ENCODE measurements at regions of chr19 and their contacts with region 1.

Region 1: DNA sequence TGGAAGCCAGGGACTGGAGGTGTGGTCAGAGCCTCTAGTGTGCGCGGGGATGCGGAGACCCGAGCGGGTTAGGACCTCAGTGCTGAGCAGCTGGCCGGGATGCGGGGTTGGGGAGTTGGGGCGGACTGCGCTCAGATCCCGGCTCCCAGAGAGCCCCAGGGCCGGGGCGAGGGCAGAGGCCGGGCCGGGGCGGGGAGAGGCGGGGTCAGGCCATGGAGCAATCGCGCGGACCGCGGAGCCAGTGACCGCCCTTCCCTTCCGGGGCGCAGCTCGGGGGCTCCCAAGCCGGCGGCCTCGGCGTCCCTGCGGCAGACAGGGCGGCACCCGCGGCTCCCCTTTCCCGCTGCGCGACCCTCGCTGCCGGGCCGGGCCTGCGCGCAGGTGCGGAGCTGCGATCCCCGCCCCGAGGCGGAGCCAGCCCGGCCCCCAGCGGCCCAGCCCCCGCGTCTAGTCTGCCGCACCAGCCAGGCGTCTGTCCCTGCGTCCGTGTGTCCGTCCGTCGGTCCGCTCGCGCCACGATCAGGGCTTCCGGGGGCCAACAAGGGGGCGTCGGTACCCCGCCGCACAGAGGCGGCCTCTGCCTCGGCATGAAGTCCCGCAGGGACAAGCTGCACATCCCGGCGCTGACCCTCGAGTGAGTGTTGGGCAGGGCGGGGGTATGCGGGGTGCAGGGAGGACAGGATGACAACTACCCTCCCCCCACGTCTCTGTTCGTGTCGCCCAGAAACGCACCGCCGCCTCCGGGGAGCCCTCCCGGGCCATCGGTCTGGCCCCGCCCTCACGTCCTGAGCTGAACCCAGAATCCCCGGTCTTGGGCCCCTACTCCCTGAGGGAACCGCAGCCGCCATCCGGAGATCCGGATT is 12.4 kb downstream of the MAST3 start:
- DNase-seq: peak in 1 of 2 experiments; percentile 84
- H3K4me3 ChIP-seq: peak overlapping the region; percentile 55 to 71 (median 62)
- H3K27ac ChIP-seq: no peak overlapping the region
- H3K4me1 ChIP-seq: peaks cover 0 to 8% (median 4%) of the 10 kb centered on the region in 4 experiments; a peak in 3 of 7 replicates
- H3K27me3 ChIP-seq: peaks cover 0 to 12% (median 9%) of the 10 kb centered on the region in 4 experiments; a peak in 5 of 7 replicates
- CTCF ChIP-seq: no peak
- EP300 ChIP-seq: no peak
- POLR2A ChIP-seq: 0 out of 3 replicates have a peak, but pooled peaks of 1 of the 2 experiments have one; percentile 13
- RAD21 ChIP-seq: no peak

Region 2: GRCh38 chr19:18083929-18084684 is 25.9 kb before region 1 on chr19:
- CTCF ChIA-PET with region 1: no interaction called
- POLR2A ChIA-PET with region 1: no interaction called
- DNase-seq: no peak
- H3K4me3 ChIP-seq: no peak overlapping the region
- H3K27ac ChIP-seq: no peak overlapping the region
- H3K4me1 ChIP-seq: no peaks in the 10 kb centered on the region; a peak in 2 of 7 replicates
- H3K27me3 ChIP-seq: no peaks in the 10 kb centered on the region
- CTCF ChIP-seq: no peak
- EP300 ChIP-seq: no peak
- POLR2A ChIP-seq: no peak
- RAD21 ChIP-seq: no peak

Region 3: DNA sequence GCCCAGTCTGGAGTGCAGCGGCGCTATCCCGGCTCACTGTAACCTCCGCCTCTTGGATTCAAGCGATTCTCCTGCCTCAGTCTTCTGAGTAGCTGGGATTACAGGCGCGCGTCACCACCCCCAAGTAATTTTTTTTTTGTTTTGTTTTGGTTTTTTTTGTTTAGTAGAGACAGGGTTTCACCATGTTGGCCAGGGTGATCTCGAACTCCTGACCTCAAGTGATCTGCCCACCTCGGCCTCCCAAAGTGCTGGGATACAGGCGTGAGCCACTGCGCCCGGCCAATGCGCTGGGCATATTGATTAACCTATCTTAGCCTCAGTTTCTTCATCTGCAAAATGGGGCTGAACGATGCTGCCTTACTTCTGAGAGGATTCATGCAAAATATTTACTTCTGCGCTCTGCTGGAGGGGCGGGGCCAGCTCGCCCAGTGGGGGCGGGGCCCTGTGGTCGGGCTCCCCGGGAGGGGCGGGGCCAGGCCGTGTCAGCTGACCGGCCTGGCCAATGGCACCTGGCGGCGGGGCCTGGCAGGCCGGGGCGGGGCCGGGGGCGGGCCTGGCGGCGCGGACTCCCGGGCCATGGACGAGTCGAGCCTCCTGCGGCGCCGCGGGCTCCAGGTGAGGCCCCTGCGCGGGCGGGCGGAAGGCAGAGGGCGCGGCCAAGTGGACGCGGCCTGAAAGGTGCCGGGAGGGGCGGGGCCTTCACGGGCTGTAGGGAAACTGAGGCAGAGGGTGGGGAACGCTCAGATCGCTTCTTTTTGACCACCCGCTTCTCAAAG is 12.6 kb before region 1 on chr19 and contains the start of gene MAST3:
- CTCF ChIA-PET with region 1: interaction called, 5 read pairs
- POLR2A ChIA-PET with region 1: interaction called, 15 read pairs
- DNase-seq: peak in 1 of 2 experiments; percentile 93
- H3K4me3 ChIP-seq: peak within 1 kb of the TSS; percentile 32 to 67 (median 34); a peak in 7 of 8 replicates
- H3K27ac ChIP-seq: no peak within 1 kb of the TSS
- H3K4me1 ChIP-seq: peaks cover 3 to 14% (median 9%) of the 10 kb centered on the region in 4 experiments; a peak in 6 of 7 replicates
- H3K27me3 ChIP-seq: peaks cover 0 to 8% (median 6%) of the 10 kb centered on the region in 4 experiments; a peak in 4 of 7 replicates
- CTCF ChIP-seq: no peak
- EP300 ChIP-seq: no peak
- POLR2A ChIP-seq: no peak
- RAD21 ChIP-seq: no peak
- total RNA-seq, gene MAST3: 9.0 TPM in 2 replicates

Region 4: DNA sequence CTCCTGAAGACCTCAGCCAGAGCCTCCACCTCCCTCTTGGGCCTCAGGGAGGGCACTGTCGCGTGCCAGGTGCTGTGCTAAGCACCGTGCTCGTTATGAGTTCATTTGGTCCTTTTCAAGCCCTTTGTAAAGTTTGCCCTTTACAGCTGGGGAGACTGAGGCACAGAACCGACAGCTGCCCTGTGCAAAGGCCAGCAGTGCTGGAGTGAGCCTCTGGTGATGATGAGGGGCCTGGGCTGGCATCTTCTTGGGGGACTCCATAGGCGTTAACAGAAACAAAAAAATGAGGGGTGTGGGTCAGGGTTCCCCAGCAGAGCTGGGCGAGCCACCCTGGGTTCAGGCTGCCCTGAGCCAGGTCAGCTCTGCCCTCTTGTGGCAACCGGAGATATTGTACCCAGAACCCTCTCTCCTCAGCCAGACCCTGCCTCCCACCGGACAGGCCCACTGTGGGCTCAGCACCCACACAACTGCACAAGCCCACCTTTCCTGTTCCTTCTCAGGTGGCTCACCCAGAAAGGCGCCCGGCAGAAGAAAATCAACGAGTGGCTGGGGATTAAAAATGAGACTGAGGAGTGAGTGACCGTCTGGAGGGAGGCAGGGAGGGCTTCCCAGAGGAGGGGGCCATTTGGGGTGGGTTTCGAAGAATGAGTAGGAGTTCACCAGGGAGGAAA is 58.1 kb after region 1 on chr19:
- CTCF ChIA-PET with region 1: interaction called, 17 read pairs
- POLR2A ChIA-PET with region 1: interaction called, 3 read pairs
- DNase-seq: peak in 1 of 2 experiments; percentile 84
- H3K4me3 ChIP-seq: no peak overlapping the region
- H3K27ac ChIP-seq: no peak overlapping the region
- H3K4me1 ChIP-seq: peaks cover 0 to under 1% (median 0%) of the 10 kb centered on the region in 4 experiments; a peak in 2 of 7 replicates
- H3K27me3 ChIP-seq: no peaks in the 10 kb centered on the region
- CTCF ChIP-seq: peak; percentile 89 to 92 (median 90)
- EP300 ChIP-seq: no peak
- POLR2A ChIP-seq: no peak
- RAD21 ChIP-seq: peak; percentile 82 to 87